K562 (cell line): ENCODE measurements at regions of chr16 and their contacts with region 1.

Region 1: DNA sequence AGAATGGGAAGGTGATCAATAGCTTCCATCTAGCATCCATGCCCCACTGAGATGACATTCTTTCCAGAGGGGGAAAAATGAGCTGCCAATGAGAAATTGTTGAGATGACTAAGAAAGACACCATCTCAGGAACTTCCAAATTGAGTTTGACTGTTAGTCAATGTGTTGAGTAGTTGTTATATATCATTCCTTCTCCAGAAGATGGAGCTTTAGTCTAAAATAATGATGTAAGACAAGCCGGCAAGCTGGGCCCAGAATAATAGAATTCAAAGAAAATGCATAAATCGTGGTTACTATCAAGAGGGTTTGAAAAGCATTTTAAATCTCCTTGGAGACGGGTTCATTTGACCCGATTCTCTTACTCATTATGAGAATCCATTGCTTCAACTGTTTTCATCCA is 71.0 kb upstream of the ATF7IP2 start:
- DNase-seq: peak in 1 of 4 experiments; percentile 42
- ATAC-seq: peak; percentile 79
- H3K4me3 ChIP-seq: no peak overlapping the region
- H3K27ac ChIP-seq: no peak overlapping the region
- H3K4me1 ChIP-seq: peaks cover 10 to 24% of the 10 kb centered on the region in 2 experiments
- H3K27me3 ChIP-seq: no peaks in the 10 kb centered on the region
- CTCF ChIP-seq: peak in 2 of 3 experiments; percentile 24 to 63; a peak in 3 of 6 replicates
- EP300 ChIP-seq: no peak
- POLR2A ChIP-seq: no peak
- RAD21 ChIP-seq: peak; percentile 67 to 91; a peak in 3 of 4 replicates

Region 2: GRCh38 chr16:9898124-9898523 is 416.7 kb before region 1 on chr16:
- CTCF ChIA-PET with region 1: no interaction called
- POLR2A ChIA-PET with region 1: no interaction called
- in situ Hi-C with region 1: no loop called
- intact Hi-C with region 1: no loop called
- DNase-seq: no peak
- ATAC-seq: no peak
- H3K4me3 ChIP-seq: no peak overlapping the region
- H3K27ac ChIP-seq: no peak overlapping the region
- H3K4me1 ChIP-seq: no peaks in the 10 kb centered on the region
- H3K27me3 ChIP-seq: no peaks in the 10 kb centered on the region; a peak in 1 of 5 replicates
- CTCF ChIP-seq: no peak
- EP300 ChIP-seq: no peak
- POLR2A ChIP-seq: no peak
- RAD21 ChIP-seq: no peak

Region 3: GRCh38 chr16:10385725-10386516 is 71.1 kb after region 1 on chr16 and contains the start of gene ATF7IP2:
- CTCF ChIA-PET with region 1: no interaction called
- POLR2A ChIA-PET with region 1: interaction called, 3 read pairs
- in situ Hi-C with region 1: no loop called
- intact Hi-C with region 1: loop called (anchors 5 kb)
- DNase-seq: peak; percentile 96 to 97 (median 96)
- ATAC-seq: peak; percentile 91
- H3K4me3 ChIP-seq: peak within 1 kb of the TSS; percentile 76
- H3K27ac ChIP-seq: peak within 1 kb of the TSS; percentile 92
- H3K4me1 ChIP-seq: peaks cover 18 to 31% of the 10 kb centered on the region in 2 experiments; a peak in 4 of 5 replicates
- H3K27me3 ChIP-seq: no peaks in the 10 kb centered on the region
- CTCF ChIP-seq: no peak
- EP300 ChIP-seq: peak; percentile 29; the same call in 1 of the 2 replicates
- POLR2A ChIP-seq: peak; percentile 99
- RAD21 ChIP-seq: peak in 1 of 2 experiments; percentile 16; a peak in 1 of 4 replicates
- polyA plus RNA-seq, gene ATF7IP2: 352 to 511 TPM